B cell (primary cell): ENCODE measurements at regions of chr13 and their contacts with region 1.

Region 1: DNA sequence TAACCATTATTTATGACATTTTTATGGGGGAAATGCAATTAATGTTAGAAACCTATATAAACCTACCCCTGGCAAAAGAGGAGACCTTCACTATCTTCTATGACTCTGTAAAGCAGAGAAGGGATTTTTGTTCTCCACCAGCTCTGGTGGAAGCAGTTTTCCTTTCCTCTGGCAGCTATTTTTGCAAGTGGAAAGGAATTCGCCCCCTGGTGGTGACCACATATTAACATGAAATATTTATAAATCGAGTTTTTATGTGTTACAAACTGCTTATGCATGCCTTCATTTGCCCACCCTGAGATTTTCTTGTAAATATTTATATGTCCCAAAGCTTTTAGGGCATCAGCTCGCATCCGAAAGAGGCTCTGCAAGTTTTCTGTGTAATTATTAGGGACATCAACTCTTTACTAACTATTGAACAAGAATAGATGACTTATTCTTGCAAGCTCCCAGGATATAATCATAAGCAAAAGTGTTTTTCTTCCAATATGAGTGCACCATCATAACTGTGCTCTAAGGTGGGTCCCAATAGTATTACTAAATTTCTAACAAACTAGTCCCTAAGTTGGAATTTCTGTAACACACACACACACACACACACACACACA is 62.4 kb downstream of the SERTM1 start:
- DNase-seq: peak; percentile 44
- ATAC-seq: no peak
- H3K4me3 ChIP-seq: no peak overlapping the region
- H3K4me3 Mint-ChIP-seq: no peak overlapping the region
- H3K27ac ChIP-seq: no peak overlapping the region
- H3K27ac Mint-ChIP-seq: no peak overlapping the region
- H3K4me1 ChIP-seq: no peaks in the 10 kb centered on the region
- H3K4me1 Mint-ChIP-seq: no peaks in the 10 kb centered on the region
- H3K27me3 ChIP-seq: no peaks in the 10 kb centered on the region
- H3K27me3 Mint-ChIP-seq: no peaks in the 10 kb centered on the region
- CTCF ChIP-seq: peak; percentile 85

Region 2: DNA sequence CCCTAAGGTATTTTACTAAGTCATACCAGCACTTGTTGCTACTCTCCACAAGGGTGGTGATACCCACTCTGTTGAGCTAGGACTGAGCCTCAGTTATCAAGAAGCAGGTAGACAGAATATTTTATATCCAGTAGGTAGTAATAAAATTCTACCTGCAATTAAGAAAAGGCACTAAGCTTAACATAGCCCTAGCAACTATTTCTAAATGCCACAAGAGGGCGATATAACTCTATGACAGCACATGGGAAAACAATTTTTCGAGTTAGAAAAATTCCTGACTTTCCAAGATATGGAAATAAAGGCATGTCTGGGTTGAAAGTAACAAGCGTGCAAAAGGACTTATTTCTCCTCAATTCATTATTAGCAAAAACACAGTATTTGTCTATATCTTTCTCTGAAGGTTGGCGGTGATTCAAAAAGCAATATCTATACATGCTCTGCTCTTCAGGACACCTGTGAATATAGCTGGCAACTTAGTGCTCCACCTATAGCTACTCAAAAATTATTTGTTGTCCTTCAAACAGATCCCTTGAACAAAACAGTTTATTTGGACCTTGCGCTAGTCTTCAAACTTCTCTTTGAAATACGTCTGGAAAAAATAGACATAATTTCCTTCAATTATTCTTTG is 453.3 kb before region 1 on chr13:
- CTCF ChIA-PET with region 1: interaction called, 10 read pairs
- POLR2A ChIA-PET with region 1: no interaction called
- intact Hi-C with region 1: no loop called
- DNase-seq: peak; percentile 33
- ATAC-seq: no peak
- H3K4me3 ChIP-seq: no peak overlapping the region
- H3K4me3 Mint-ChIP-seq: no peak overlapping the region
- H3K27ac ChIP-seq: no peak overlapping the region
- H3K27ac Mint-ChIP-seq: no peak overlapping the region
- H3K4me1 ChIP-seq: no peaks in the 10 kb centered on the region
- H3K4me1 Mint-ChIP-seq: no peaks in the 10 kb centered on the region
- H3K27me3 ChIP-seq: no peaks in the 10 kb centered on the region
- H3K27me3 Mint-ChIP-seq: no peaks in the 10 kb centered on the region
- CTCF ChIP-seq: peak; percentile 81

Region 3: GRCh38 chr13:36346222-36347083 is 389.8 kb before region 1 on chr13 and contains the start of gene SPART:
- CTCF ChIA-PET with region 1: interaction called, 15 read pairs
- POLR2A ChIA-PET with region 1: no interaction called
- intact Hi-C with region 1: no loop called
- DNase-seq: peak; percentile 92
- ATAC-seq: peak; percentile 85
- H3K4me3 ChIP-seq: peak within 1 kb of the TSS; percentile 64 to 98 (median 85)
- H3K4me3 Mint-ChIP-seq: peak within 1 kb of the TSS; percentile 95
- H3K27ac ChIP-seq: peak within 1 kb of the TSS; percentile 93 to 96
- H3K27ac Mint-ChIP-seq: peak within 1 kb of the TSS; percentile 96
- H3K4me1 ChIP-seq: peaks cover 10 to 16% of the 10 kb centered on the region in 2 donors
- H3K4me1 Mint-ChIP-seq: peaks cover 24% of the 10 kb centered on the region
- H3K27me3 ChIP-seq: no peaks in the 10 kb centered on the region
- H3K27me3 Mint-ChIP-seq: peaks cover 14% of the 10 kb centered on the region
- CTCF ChIP-seq: peak; percentile 88
- total RNA-seq, gene SPART: 18.6 and 20.8 TPM in 2 replicates

Region 4: DNA sequence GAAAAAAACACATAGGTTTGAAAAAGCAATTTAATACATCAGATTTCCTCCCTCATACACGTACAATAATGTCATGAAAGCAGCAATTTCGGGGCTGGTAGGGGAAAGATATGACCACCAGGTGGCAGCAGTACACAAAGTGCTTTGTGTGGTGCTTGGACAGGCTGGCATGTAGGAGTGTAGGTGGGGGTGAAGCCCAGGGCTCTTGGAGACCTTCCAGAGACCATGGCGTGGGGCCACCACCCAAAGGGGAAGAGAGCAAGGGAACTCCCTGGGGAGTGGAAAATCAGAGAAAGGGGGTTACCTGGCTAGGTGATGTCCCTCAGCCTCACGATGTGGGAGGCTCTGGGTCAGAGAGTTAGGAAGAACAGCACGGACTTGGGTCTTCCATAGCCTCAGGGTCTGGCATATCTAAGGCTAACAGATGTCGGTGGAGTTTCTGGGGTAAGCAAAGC is 315.8 kb before region 1 on chr13:
- CTCF ChIA-PET with region 1: interaction called, 34 read pairs
- POLR2A ChIA-PET with region 1: no interaction called
- intact Hi-C with region 1: no loop called
- DNase-seq: peak; percentile 76
- ATAC-seq: peak; percentile 80
- H3K4me3 ChIP-seq: no peak overlapping the region
- H3K4me3 Mint-ChIP-seq: no peak overlapping the region
- H3K27ac ChIP-seq: no peak overlapping the region
- H3K27ac Mint-ChIP-seq: no peak overlapping the region
- H3K4me1 ChIP-seq: peaks cover 0 to 9% of the 10 kb centered on the region in 2 donors
- H3K4me1 Mint-ChIP-seq: peaks cover 6% of the 10 kb centered on the region
- H3K27me3 ChIP-seq: peaks cover 0 to 7% (median 2%) of the 10 kb centered on the region in 4 experiments
- H3K27me3 Mint-ChIP-seq: peaks cover 36% of the 10 kb centered on the region
- CTCF ChIP-seq: peak; percentile 97

Region 5: GRCh38 chr13:36453516-36453915 is 282.7 kb before region 1 on chr13:
- CTCF ChIA-PET with region 1: interaction called, 29 read pairs
- POLR2A ChIA-PET with region 1: no interaction called
- intact Hi-C with region 1: loop called (anchors 1 kb)
- DNase-seq: peak; percentile 7
- ATAC-seq: no peak
- H3K4me3 ChIP-seq: no peak overlapping the region
- H3K4me3 Mint-ChIP-seq: no peak overlapping the region
- H3K27ac ChIP-seq: no peak overlapping the region
- H3K27ac Mint-ChIP-seq: no peak overlapping the region
- H3K4me1 ChIP-seq: no peaks in the 10 kb centered on the region
- H3K4me1 Mint-ChIP-seq: no peaks in the 10 kb centered on the region
- H3K27me3 ChIP-seq: no peaks in the 10 kb centered on the region
- H3K27me3 Mint-ChIP-seq: peaks cover 12% of the 10 kb centered on the region
- CTCF ChIP-seq: no peak